ENCODE measurements at regions of chr17 and their contacts with region 1.

Region 1: DNA sequence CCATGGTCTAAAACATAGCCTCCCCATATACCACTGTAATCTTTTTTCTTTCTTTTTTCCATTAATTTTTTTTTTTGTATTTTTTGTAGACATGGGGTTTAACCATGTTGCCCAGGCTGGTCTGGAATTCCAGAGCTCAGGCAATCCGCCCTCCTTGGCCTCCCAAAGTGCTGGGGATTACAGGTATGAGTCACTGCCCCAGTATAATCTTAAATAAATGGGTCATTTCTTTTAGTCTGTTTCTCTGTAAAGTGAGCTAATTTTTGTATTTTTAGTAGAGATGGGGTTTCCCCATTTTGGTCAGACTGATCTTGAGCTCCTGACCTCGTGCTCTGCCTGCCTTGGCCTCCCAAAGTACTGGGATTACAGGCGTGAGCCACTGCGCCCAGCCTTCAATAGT is 5.7 kb upstream of the NME1 start:
- DNase-seq: no peak

Region 2: GRCh38 chr17:51097708-51098446 is 49.8 kb before region 1 on chr17:
- intact Hi-C with region 1: loop called in 1 of 2 experiments (anchors 2 kb)
- DNase-seq: no peak

Region 3: GRCh38 chr17:51115179-51115578 is 32.5 kb before region 1 on chr17:
- intact Hi-C with region 1: no loop called
- DNase-seq: no peak

Region 4: GRCh38 chr17:51180486-51180885 is 32.8 kb after region 1 on chr17:
- intact Hi-C with region 1: no loop called
- DNase-seq: no peak